Endothelial cell of umbilical vein (primary cell): ENCODE measurements at regions of chr22 and their contacts with region 1.

Region 1: GRCh38 chr22:39392341-39392948 is 7.1 kb upstream of the TAB1 start:
- DNase-seq: no peak
- H3K4me3 ChIP-seq: no peak overlapping the region
- H3K27ac ChIP-seq: no peak overlapping the region
- H3K4me1 ChIP-seq: peaks cover 4% of the 10 kb centered on the region
- H3K27me3 ChIP-seq: peaks cover 0 to 2% of the 10 kb centered on the region in 2 experiments
- CTCF ChIP-seq: no peak
- POLR2A ChIP-seq: no peak

Region 2: DNA sequence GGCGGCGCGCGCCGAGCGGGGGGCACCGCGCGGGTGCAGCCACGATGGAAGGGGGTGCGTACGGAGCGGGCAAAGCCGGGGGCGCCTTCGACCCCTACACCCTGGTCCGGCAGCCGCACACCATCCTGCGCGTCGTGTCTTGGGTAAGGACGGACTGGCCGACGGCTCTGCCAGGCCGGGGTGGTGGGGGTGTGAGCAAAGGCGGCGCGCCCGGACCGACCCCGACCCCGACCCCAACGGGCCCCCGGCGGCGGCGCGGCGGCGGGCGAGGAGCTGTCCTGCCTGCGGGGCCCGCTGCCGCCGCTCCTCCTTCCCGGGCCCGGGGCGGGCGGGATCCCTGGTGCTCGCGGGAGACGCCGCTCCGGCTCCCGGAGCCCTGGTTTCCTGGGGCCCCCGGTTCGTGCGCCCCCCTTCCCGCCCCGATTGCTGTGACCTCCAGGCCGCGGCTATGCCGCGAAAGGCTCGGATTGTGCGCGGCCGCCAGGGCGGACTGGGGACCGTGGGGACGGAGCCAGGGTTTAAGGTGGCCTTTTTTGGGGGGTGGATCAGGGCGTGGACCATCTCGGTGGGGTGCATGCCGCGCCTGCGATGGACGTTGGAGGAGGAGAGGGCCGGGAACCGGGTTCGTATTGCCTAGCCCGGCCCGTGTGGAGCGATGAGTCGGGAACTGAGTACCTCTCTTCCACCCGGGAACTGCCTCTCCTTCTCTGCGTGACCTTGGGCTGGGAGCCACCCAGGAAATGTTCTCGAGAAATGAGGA is 42.3 kb before region 1 on chr22 and contains the start of gene SYNGR1:
- CTCF ChIA-PET with region 1: no interaction called
- POLR2A ChIA-PET with region 1: no interaction called
- dilution Hi-C with region 1: no loop called
- intact Hi-C with region 1: loop called (anchors 5 kb)
- DNase-seq: no peak
- H3K4me3 ChIP-seq: peak within 1 kb of the TSS; percentile 58 to 61 (median 60)
- H3K27ac ChIP-seq: no peak within 1 kb of the TSS
- H3K4me1 ChIP-seq: peaks cover 4% of the 10 kb centered on the region
- H3K27me3 ChIP-seq: peaks cover 0 to 2% of the 10 kb centered on the region in 2 experiments
- CTCF ChIP-seq: peak in 1 of 2 donors; percentile 7
- POLR2A ChIP-seq: no peak
- total RNA-seq, gene SYNGR1: 3.7 and 3.8 TPM in 2 replicates

Region 3: GRCh38 chr22:39445678-39446294 is 53.3 kb after region 1 on chr22:
- CTCF ChIA-PET with region 1: no interaction called
- POLR2A ChIA-PET with region 1: interaction called, 12 read pairs
- dilution Hi-C with region 1: no loop called
- intact Hi-C with region 1: no loop called
- DNase-seq: no peak
- H3K4me3 ChIP-seq: no peak overlapping the region
- H3K27ac ChIP-seq: no peak overlapping the region
- H3K4me1 ChIP-seq: no peaks in the 10 kb centered on the region
- H3K27me3 ChIP-seq: no peaks in the 10 kb centered on the region
- CTCF ChIP-seq: no peak
- POLR2A ChIP-seq: no peak